ENCODE measurements at regions of chr6 and their contacts with region 1.

Region 1: DNA sequence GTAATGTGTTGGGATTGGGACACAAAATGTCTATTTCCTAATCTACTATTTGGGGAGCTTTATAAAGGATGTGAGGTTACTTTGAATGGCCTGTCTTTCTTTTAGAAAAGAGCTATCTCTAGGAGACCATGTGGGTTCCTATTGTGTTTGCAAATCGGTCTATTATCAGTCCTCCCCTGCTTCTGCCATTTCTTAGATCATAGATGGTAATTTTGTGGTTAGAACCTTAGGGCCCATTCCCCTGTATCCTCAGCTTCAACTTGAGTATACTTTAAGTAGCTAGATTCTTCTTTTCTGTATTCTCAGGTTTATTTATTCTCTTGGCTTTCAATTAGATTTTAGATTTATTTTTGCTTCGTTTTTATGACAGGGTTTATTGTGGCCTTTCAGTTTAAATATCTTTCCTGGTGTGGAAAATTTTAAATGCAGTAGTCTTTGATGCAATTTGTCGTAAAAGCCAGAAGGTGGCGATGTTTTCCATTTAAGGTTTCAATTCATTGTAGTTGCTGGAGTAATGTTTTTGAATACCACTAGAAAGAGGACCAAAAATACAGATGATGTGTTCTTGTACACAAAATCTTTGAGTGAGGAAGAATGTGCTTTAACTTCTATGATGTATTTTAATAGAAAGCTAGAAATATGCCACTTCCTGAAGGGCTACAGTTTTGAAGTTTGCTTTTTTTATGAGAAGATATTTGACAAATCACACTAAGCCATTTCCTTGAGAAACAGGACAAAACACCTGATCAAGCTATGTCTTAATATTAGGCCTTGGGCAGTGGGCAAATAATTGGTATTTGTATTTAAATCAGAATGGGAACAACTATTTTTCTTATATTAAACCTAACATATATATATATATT is 20.3 kb downstream of the TBPL1 start:
- DNase-seq: peak; percentile 47
- H3K4me3 ChIP-seq: no peak overlapping the region
- H3K27ac ChIP-seq: peak overlapping the region in 1 of 2 experiments; percentile 1; a peak in 1 of 4 replicates
- H3K4me1 ChIP-seq: peaks cover 6 to 19% of the 10 kb centered on the region in 2 experiments; a peak in 2 of 4 replicates
- H3K27me3 ChIP-seq: no peaks in the 10 kb centered on the region
- CTCF ChIP-seq: peak; percentile 85
- EP300 ChIP-seq: no peak
- RAD21 ChIP-seq: peak; percentile 74

Region 2: GRCh38 chr6:133817460-133818047 is 155.8 kb before region 1 on chr6:
- CTCF ChIA-PET with region 1: no interaction called
- POLR2A ChIA-PET with region 1: no interaction called
- DNase-seq: peak; percentile 56
- H3K4me3 ChIP-seq: no peak overlapping the region
- H3K27ac ChIP-seq: no peak overlapping the region
- H3K4me1 ChIP-seq: no peaks in the 10 kb centered on the region
- H3K27me3 ChIP-seq: no peaks in the 10 kb centered on the region; the same call in 1 of the 2 replicates
- CTCF ChIP-seq: peak; percentile 76
- EP300 ChIP-seq: no peak
- RAD21 ChIP-seq: peak; percentile 42

Region 3: GRCh38 chr6:133952815-133953633 is 20.3 kb before region 1 on chr6 and contains the start of gene TBPL1:
- CTCF ChIA-PET with region 1: interaction called, 21 read pairs
- POLR2A ChIA-PET with region 1: interaction called, 6 read pairs
- DNase-seq: peak; percentile 95
- H3K4me3 ChIP-seq: peak within 1 kb of the TSS; percentile 77 to 98
- H3K27ac ChIP-seq: peak within 1 kb of the TSS; percentile 92 to 94
- H3K4me1 ChIP-seq: peaks cover 6 to 24% of the 10 kb centered on the region in 2 experiments; a peak in 3 of 4 replicates
- H3K27me3 ChIP-seq: no peaks in the 10 kb centered on the region
- CTCF ChIP-seq: no peak
- EP300 ChIP-seq: peak; percentile 35 to 37; a peak in 1 of 4 replicates
- RAD21 ChIP-seq: no peak
- polyA plus RNA-seq, gene TBPL1: 16.3 and 22.4 TPM in 2 replicates

Region 4: DNA sequence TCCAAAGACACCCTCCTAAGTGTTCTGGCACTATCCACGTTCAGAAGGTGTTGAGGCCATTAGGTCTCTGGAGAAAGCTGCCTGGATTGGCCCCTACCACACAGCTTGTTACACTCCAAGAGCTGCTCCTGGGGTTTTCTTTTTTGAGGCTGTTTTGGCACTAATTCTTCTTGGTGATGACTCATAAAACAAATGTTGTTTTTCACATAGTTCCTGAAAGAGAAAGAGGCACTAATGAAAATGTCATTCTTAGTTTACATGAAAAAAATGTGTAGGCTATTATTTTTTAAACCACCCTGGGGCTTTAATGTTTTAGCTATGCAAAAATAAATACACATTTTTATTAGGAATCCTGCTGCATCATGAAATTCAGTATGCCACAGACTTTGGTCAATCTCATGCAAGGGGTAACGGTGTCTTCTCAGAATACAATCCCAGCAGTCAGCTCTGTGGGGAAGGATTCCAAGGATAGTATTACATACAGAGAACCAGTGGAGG is 17.8 kb after region 1 on chr6:
- CTCF ChIA-PET with region 1: interaction called, 17 read pairs
- POLR2A ChIA-PET with region 1: no interaction called
- DNase-seq: no peak
- H3K4me3 ChIP-seq: no peak overlapping the region
- H3K27ac ChIP-seq: peak overlapping the region in 1 of 2 experiments; percentile 63; a peak in 2 of 4 replicates
- H3K4me1 ChIP-seq: 0 out of 4 replicates have a peak, but pooled peaks cover 0 to 8% of the 10 kb centered on the region in 2 experiments
- H3K27me3 ChIP-seq: no peaks in the 10 kb centered on the region
- CTCF ChIP-seq: no peak
- EP300 ChIP-seq: no peak
- RAD21 ChIP-seq: no peak

Region 5: DNA sequence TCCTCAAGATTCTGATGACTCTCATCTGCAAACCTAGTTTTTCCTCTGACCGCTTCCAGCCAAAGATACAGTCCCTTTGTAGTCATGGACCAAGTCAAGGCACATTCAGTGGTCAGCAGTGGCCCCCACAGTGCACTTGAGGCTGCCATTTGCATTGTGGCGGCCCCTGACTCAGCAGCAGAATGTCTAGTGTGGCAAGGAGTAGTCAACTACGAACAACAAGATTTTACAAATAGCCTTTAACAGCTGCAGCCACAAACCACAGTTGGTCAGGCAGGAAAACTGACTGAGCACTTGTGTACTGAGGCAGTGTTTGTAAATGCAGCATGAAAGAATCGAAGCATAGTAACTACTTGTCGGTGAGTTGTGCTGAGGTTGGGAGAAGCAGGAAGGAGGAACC is 29.5 kb after region 1 on chr6:
- CTCF ChIA-PET with region 1: interaction called, 14 read pairs
- POLR2A ChIA-PET with region 1: no interaction called
- DNase-seq: no peak
- H3K4me3 ChIP-seq: no peak overlapping the region
- H3K27ac ChIP-seq: no peak overlapping the region
- H3K4me1 ChIP-seq: peaks cover 0 to 3% of the 10 kb centered on the region in 2 experiments; a peak in 1 of 4 replicates
- H3K27me3 ChIP-seq: no peaks in the 10 kb centered on the region
- CTCF ChIP-seq: no peak
- EP300 ChIP-seq: no peak
- RAD21 ChIP-seq: no peak

Region 6: DNA sequence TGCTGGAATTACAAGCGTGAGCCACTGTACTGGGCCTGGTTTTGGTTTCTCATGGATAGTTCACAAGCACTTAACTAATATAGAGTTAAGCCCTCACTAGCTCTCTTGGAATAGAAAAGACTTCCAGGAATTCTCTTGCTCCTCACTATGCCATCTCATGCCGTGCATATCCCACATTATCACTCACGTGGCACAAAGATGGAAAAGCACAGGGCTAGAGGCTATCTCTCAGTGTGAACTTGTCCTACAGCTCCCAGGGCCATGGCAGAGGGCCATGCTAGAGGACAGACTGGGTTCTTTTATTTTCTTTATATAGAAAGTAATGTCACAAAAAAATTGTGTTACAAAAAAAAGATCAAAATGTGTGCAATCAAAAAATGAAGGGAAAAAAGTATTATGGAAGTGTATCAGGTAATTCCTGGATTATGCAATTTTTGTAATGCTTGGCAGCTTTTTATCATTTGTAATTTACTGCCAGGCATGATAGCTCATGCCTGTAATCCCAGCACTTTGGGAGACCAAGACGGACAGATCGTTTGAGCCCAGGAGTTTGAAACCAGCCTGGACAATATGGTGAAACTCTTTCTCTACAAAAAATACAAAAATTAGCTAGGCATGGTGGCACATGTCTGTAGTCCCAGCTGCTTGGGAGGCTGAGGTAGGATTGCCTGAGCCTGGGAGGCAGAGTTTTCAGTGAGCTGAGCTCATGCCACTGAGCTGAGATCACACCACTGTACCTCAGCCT is 85.5 kb after region 1 on chr6:
- CTCF ChIA-PET with region 1: interaction called, 62 read pairs
- POLR2A ChIA-PET with region 1: no interaction called
- DNase-seq: no peak
- H3K4me3 ChIP-seq: no peak overlapping the region
- H3K27ac ChIP-seq: no peak overlapping the region
- H3K4me1 ChIP-seq: peaks cover 3 to 16% of the 10 kb centered on the region in 2 experiments; a peak in 2 of 4 replicates
- H3K27me3 ChIP-seq: no peaks in the 10 kb centered on the region
- CTCF ChIP-seq: no peak
- EP300 ChIP-seq: no peak
- RAD21 ChIP-seq: no peak

Measured in SK-N-SH (cell line).